Natural killer cell (primary cell): ENCODE measurements at regions of chr18 and their contacts with region 1.

Region 1: GRCh38 chr18:839224-840022 is 27.4 kb upstream of the YES1 start:
- DNase-seq: peak; percentile 89 to 90
- ATAC-seq: peak; percentile 91 to 100 (median 97)
- H3K4me3 ChIP-seq: no peak overlapping the region
- H3K4me3 Mint-ChIP-seq: no peak overlapping the region
- H3K27ac ChIP-seq: no peak overlapping the region
- H3K27ac Mint-ChIP-seq: no peak overlapping the region
- H3K4me1 ChIP-seq: peaks cover 5% of the 10 kb centered on the region
- H3K4me1 Mint-ChIP-seq: peaks cover 0 to 12% of the 10 kb centered on the region in 2 donors
- H3K27me3 ChIP-seq: no peaks in the 10 kb centered on the region
- H3K27me3 Mint-ChIP-seq: peaks cover 8 to 23% of the 10 kb centered on the region in 2 donors
- CTCF ChIP-seq: peak; percentile 94

Region 2: DNA sequence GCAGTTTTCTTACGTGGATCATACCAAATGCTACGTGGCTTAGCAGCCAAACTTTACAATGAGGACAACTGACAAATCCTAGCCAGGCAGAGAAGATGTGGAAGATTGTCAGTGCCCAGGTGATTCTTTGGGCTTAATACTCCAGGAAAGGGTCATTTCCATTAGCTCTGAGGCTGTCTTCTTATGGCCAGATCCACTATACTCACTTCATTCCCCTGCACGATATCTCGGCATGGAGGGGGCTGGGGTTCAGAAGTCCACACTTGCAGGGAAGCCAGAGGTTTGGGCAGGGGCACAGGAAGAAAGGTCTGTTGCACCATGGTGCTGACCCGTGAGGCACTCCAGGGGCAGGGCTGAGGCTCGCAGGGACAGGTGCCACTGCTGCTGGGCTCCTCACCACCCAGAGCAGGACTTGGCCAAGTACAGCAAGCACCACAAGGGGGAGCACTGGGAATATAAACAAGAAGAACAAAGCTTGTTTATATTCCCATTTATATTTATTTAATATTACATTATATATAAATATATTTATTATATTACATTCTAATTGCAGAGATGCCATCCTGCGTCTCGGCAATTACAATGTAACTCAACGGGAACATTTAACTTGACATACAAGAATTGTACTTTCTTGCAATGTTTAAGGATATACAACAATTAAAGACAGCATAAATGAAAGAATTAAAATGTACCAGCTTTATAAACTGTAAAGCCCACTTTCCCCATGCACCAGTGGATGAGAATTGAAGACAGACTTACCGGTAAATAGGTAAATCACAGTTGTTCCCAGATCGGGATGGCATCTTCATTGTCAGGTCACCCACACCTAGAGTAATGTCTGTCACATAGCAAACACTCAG is 215.4 kb before region 1 on chr18:
- intact Hi-C with region 1: loop called (anchors 1 kb)
- DNase-seq: peak; percentile 31 to 76
- ATAC-seq: peak; percentile 54 to 81 (median 72)
- H3K4me3 ChIP-seq: no peak overlapping the region
- H3K4me3 Mint-ChIP-seq: no peak overlapping the region
- H3K27ac ChIP-seq: no peak overlapping the region
- H3K27ac Mint-ChIP-seq: no peak overlapping the region
- H3K4me1 ChIP-seq: no peaks in the 10 kb centered on the region
- H3K4me1 Mint-ChIP-seq: no peaks in the 10 kb centered on the region
- H3K27me3 ChIP-seq: no peaks in the 10 kb centered on the region
- H3K27me3 Mint-ChIP-seq: peaks cover 7 to 12% of the 10 kb centered on the region in 2 donors
- CTCF ChIP-seq: peak; percentile 66

Region 3: GRCh38 chr18:644395-645004 is 194.9 kb before region 1 on chr18:
- intact Hi-C with region 1: loop called (anchors 5 kb)
- DNase-seq: no peak
- ATAC-seq: no peak
- H3K4me3 ChIP-seq: no peak overlapping the region
- H3K4me3 Mint-ChIP-seq: no peak overlapping the region
- H3K27ac ChIP-seq: no peak overlapping the region
- H3K27ac Mint-ChIP-seq: no peak overlapping the region
- H3K4me1 ChIP-seq: no peaks in the 10 kb centered on the region
- H3K4me1 Mint-ChIP-seq: no peaks in the 10 kb centered on the region
- H3K27me3 ChIP-seq: peaks cover 2% of the 10 kb centered on the region
- H3K27me3 Mint-ChIP-seq: peaks cover 0 to 6% of the 10 kb centered on the region in 2 donors
- CTCF ChIP-seq: no peak

Region 4: DNA sequence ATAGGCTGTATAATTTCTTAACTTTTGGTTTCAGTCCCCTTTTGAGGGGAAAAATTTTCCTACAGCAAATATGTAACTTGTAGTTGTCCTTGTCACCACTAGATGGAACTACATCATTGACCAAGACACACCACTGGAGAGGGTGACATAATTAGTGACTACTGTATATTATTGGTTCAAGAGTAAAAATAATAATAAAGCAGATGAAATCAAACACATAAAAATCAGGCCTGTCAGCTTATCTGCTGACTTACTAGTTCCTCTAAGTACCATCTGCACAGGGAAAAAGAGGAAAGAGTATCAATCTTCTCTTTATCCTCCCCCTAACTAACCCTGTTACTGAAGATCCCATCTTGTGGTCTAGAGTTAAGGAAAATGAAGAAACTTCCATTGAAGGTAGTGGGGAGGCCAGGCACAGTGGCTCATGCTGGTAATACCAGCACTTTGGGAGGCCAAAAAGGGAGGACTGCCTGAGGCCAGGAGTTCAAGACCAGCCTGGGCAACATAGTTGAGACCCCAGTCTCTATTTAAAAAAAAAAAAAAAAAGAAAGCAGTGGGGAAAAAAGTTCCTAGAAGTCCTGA is 97.4 kb before region 1 on chr18:
- intact Hi-C with region 1: loop called (anchors 1 kb)
- DNase-seq: peak in 1 of 2 donors; percentile 73
- ATAC-seq: peak; percentile 81 to 89 (median 83)
- H3K4me3 ChIP-seq: no peak overlapping the region
- H3K4me3 Mint-ChIP-seq: no peak overlapping the region
- H3K27ac ChIP-seq: peak overlapping the region; percentile 9
- H3K27ac Mint-ChIP-seq: peak overlapping the region; percentile 45 to 49
- H3K4me1 ChIP-seq: peaks cover 2% of the 10 kb centered on the region
- H3K4me1 Mint-ChIP-seq: peaks cover 5 to 13% of the 10 kb centered on the region in 2 donors
- H3K27me3 ChIP-seq: no peaks in the 10 kb centered on the region
- H3K27me3 Mint-ChIP-seq: no peaks in the 10 kb centered on the region
- CTCF ChIP-seq: peak; percentile 77

Region 5: DNA sequence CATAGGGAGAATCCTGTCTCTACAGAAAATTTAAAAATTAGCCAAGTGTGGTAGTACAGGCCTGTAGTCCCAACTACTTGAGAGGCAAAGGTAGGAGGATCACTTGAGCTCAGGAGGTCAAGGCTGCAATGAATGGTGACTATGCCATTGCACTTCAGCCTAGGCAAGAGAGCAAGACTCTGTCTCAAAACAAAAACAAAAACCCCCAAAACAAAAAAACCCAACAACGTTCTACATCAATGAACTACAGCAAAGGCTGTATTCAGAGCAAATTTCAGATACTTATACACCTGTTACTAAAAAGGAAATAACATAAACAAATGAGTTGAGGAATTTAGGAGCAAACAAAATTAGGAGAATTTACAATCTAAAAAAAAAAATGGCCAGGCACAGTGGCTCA is 50.0 kb before region 1 on chr18:
- intact Hi-C with region 1: no loop called
- DNase-seq: no peak
- ATAC-seq: no peak
- H3K4me3 ChIP-seq: no peak overlapping the region
- H3K4me3 Mint-ChIP-seq: peak overlapping the region; percentile 28
- H3K27ac ChIP-seq: no peak overlapping the region
- H3K27ac Mint-ChIP-seq: peak overlapping the region in 1 of 2 donors; percentile 75
- H3K4me1 ChIP-seq: peaks cover 16% of the 10 kb centered on the region
- H3K4me1 Mint-ChIP-seq: peaks cover 49 to 55% of the 10 kb centered on the region in 2 donors
- H3K27me3 ChIP-seq: no peaks in the 10 kb centered on the region
- H3K27me3 Mint-ChIP-seq: no peaks in the 10 kb centered on the region
- CTCF ChIP-seq: no peak